GM23248 (cell line): ENCODE measurements at regions of chr10 and their contacts with region 1.

Region 1: GRCh38 chr10:110893559-110894179 is 21.9 kb downstream of the PDCD4 start:
- DNase-seq: peak; percentile 72
- H3K4me3 ChIP-seq: no peak overlapping the region
- H3K27ac ChIP-seq: no peak overlapping the region
- H3K4me1 ChIP-seq: peaks cover 15% of the 10 kb centered on the region
- H3K27me3 ChIP-seq: no peaks in the 10 kb centered on the region

Region 2: DNA sequence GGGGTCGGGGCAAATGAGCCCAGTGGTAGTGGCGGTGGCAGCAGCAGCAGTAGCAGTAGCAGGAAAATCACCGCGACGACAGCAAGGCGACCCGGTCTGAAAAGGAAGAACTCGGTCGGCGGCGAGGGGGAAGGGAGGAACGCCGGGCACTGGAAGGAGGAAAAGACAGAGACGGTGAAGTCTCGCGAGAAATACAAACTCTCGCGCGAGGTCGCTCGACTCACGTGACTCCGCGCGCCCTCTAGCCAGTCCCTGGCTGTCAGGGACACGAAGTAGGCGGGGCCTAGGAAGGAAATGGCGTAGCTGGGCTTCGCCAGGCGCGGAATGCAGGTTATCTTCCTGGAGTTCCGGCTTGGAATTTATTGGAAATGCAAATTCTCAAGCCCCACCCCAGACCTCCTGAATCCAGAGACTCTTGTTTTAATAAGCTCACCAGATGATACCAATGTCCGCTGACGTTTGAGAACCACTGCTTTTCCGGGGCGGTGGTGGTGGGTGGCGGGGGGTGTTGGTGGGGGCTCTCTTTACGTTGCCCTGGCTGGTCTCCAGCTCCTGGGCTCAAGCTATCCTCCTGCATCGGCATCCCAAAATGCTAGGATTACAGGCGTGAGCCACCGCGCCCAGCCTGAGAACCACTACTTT is 588.8 kb before region 1 on chr10 and contains the start of gene SMNDC1:
- in situ Hi-C with region 1: loop called (anchors 25 kb)
- DNase-seq: peak; percentile 100
- H3K4me3 ChIP-seq: peak within 1 kb of the TSS; percentile 90
- H3K27ac ChIP-seq: peak within 1 kb of the TSS; percentile 84
- H3K4me1 ChIP-seq: peaks cover 45% of the 10 kb centered on the region
- H3K27me3 ChIP-seq: no peaks in the 10 kb centered on the region
- total RNA-seq, gene SMNDC1: 5.1 and 5.3 TPM in 2 replicates

Region 3: DNA sequence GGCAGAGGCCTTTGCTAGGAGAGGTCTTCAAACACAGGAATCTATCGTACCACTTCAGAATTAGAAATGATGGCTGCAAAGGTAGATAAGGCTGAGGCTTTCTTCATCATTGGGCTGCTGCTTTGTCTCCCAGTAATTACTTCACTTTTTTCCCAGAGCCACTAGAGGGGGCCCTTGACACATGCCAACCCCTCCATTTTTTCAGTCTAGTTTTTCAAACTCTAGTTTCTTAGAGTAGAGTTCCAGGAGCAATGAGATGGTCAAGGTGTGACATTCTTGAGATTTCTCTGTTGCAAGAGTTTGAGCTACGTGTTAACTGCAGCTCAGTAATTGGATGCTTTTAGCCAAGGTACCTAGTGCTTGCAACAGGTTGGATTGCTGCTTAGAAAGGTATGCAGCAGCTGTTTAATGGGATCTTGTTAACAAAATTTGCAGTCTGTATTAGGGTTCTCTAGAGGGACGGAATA is 283.3 kb before region 1 on chr10:
- in situ Hi-C with region 1: loop called (anchors 25 kb)
- DNase-seq: peak; percentile 70
- H3K4me3 ChIP-seq: no peak overlapping the region
- H3K27ac ChIP-seq: no peak overlapping the region
- H3K4me1 ChIP-seq: peaks cover 9% of the 10 kb centered on the region; the same call in 1 of the 2 replicates
- H3K27me3 ChIP-seq: no peaks in the 10 kb centered on the region

Region 4: GRCh38 chr10:111344804-111345203 is 451.1 kb after region 1 on chr10:
- in situ Hi-C with region 1: no loop called
- DNase-seq: peak; percentile 45
- H3K4me3 ChIP-seq: no peak overlapping the region
- H3K27ac ChIP-seq: no peak overlapping the region
- H3K4me1 ChIP-seq: no peaks in the 10 kb centered on the region
- H3K27me3 ChIP-seq: no peaks in the 10 kb centered on the region